Activated CD4-positive, alpha-beta memory T cell treated with anti-CD3 and anti-CD28 coated beads, Interleukin-2, amount 10 ng/mL, durations not matched to agents 7 days and 5 days (primary cell): ENCODE measurements at regions of chr12 and their contacts with region 1.

Region 1: DNA sequence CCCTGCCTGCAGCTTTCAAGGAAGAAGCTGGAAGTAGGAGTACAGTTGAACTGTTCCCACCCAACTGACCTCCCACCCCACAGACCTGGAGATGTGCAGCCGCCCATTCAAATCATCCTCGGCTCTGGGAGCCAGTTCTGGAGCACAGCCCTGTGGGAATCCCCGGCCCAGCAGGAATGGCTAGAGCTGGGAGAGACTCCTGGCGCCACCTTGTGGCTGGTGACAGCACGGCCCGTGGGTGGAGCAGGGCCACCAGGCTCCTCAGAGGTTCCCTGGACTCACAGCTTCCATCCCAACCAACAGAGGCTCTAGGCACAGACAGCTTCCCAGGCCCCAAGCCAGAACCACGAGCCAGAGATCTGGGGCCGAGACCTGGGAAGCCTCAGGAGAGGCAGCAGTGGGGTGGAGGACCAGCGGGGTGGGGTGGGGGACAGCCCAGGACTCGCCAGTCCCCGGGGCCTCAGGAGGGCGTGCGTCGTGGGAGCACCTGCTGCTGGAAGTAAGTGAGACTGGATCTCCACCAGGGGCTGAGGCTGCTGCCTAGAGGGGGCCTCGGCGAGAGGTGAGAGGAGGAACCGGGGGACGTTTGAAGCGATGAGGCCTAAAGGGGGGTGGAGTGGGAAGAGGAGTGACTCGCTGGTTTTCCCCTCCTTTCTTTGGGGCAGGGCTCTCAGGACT is 43.4 kb downstream of the RNF34 start:
- DNase-seq: peak; percentile 67
- H3K4me3 Mint-ChIP-seq: no peak overlapping the region
- H3K27ac Mint-ChIP-seq: no peak overlapping the region
- H3K4me1 Mint-ChIP-seq: peaks cover 2% of the 10 kb centered on the region
- H3K27me3 Mint-ChIP-seq: no peaks in the 10 kb centered on the region

Region 2: GRCh38 chr12:121334513-121335343 is 108.6 kb before region 1 on chr12:
- CTCF ChIA-PET with region 1: interaction called, 63 read pairs
- POLR2A ChIA-PET with region 1: no interaction called
- DNase-seq: no peak
- H3K4me3 Mint-ChIP-seq: no peak overlapping the region
- H3K27ac Mint-ChIP-seq: peak overlapping the region; percentile 49
- H3K4me1 Mint-ChIP-seq: peaks cover 6% of the 10 kb centered on the region
- H3K27me3 Mint-ChIP-seq: no peaks in the 10 kb centered on the region

Region 3: GRCh38 chr12:121351820-121352681 is 91.3 kb before region 1 on chr12 and contains the start of gene ANAPC5:
- CTCF ChIA-PET with region 1: interaction called, 10 read pairs
- POLR2A ChIA-PET with region 1: interaction called, 7 read pairs
- DNase-seq: peak; percentile 93
- H3K4me3 Mint-ChIP-seq: peak within 1 kb of the TSS; percentile 91
- H3K27ac Mint-ChIP-seq: peak within 1 kb of the TSS; percentile 91
- H3K4me1 Mint-ChIP-seq: peaks cover 36% of the 10 kb centered on the region
- H3K27me3 Mint-ChIP-seq: peaks cover 5% of the 10 kb centered on the region
- total RNA-seq, gene ANAPC5: 125 to 131 TPM

Region 4: DNA sequence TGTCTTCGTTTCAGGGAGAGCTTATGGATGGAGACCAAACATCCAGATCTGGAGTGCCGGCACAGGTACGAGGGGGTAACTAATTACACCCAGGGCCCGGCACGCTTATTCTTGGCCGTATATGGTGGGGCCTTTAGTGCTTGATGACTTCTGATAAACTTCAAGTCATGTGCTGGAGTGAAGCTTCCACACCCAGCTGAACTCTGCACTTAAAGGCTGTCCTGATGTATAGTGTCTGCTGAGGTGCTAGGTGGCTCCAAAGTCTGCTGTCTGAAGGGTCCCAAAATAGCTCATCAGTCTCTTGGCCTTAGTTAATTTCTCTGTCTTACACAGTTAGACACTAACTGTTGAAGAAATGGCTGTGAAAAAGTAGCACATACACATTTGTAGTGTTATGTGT is 25.5 kb before region 1 on chr12:
- CTCF ChIA-PET with region 1: interaction called, 18 read pairs
- POLR2A ChIA-PET with region 1: no interaction called
- DNase-seq: no peak
- H3K4me3 Mint-ChIP-seq: no peak overlapping the region
- H3K27ac Mint-ChIP-seq: no peak overlapping the region
- H3K4me1 Mint-ChIP-seq: peaks cover 11% of the 10 kb centered on the region
- H3K27me3 Mint-ChIP-seq: no peaks in the 10 kb centered on the region

Region 5: GRCh38 chr12:121423682-121424623 is 19.4 kb before region 1 on chr12:
- CTCF ChIA-PET with region 1: interaction called, 41 read pairs
- POLR2A ChIA-PET with region 1: interaction called, 3 read pairs
- DNase-seq: no peak
- H3K4me3 Mint-ChIP-seq: no peak overlapping the region
- H3K27ac Mint-ChIP-seq: no peak overlapping the region
- H3K4me1 Mint-ChIP-seq: peaks cover 3% of the 10 kb centered on the region
- H3K27me3 Mint-ChIP-seq: no peaks in the 10 kb centered on the region

Region 6: DNA sequence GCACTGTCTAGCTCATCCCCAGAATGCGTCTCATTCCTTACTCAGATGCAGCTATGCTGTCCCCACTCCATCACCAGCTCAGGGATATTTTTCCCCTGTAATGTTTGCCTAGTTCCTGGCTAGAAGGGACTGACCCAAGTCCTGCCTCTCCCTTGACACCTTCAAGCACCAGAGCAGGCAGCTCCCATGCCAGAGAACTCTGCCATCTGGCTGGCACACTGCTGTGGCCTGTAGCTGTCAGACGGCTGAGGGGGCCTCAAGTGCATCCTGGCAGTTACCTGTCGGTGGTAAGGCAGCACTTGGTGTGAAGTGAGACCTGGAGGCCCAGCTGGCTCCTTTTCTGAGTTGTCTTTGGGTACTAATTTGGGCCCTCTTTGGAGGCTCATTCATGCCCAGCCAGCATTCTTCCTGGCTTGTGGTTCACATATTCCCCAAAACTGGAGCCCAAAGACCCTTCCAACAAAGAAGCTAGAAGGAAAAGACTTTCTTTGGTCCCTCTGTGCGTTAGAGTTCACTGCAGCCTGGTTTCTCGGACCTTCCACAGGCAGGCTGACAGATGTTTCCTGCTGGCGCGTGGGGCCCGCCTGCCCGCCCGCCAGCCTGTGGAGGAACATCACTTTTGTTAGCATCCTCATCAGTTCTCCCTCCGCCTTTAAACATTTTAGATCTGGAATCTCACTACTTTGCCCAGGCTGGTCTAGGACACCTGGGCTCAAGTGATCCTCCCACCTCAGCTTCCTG is 10.4 kb before region 1 on chr12:
- CTCF ChIA-PET with region 1: interaction called, 41 read pairs
- POLR2A ChIA-PET with region 1: interaction called, 6 read pairs
- DNase-seq: no peak
- H3K4me3 Mint-ChIP-seq: no peak overlapping the region
- H3K27ac Mint-ChIP-seq: no peak overlapping the region
- H3K4me1 Mint-ChIP-seq: peaks cover 2% of the 10 kb centered on the region
- H3K27me3 Mint-ChIP-seq: no peaks in the 10 kb centered on the region

Region 7: GRCh38 chr12:121455766-121456420 is 12.6 kb after region 1 on chr12:
- CTCF ChIA-PET with region 1: interaction called, 11 read pairs
- POLR2A ChIA-PET with region 1: interaction called, 4 read pairs
- DNase-seq: no peak
- H3K4me3 Mint-ChIP-seq: no peak overlapping the region
- H3K27ac Mint-ChIP-seq: no peak overlapping the region
- H3K4me1 Mint-ChIP-seq: peaks cover 30% of the 10 kb centered on the region
- H3K27me3 Mint-ChIP-seq: no peaks in the 10 kb centered on the region